IMR-90 (cell line): ENCODE measurements at regions of chr3 and their contacts with region 1.

Region 1: DNA sequence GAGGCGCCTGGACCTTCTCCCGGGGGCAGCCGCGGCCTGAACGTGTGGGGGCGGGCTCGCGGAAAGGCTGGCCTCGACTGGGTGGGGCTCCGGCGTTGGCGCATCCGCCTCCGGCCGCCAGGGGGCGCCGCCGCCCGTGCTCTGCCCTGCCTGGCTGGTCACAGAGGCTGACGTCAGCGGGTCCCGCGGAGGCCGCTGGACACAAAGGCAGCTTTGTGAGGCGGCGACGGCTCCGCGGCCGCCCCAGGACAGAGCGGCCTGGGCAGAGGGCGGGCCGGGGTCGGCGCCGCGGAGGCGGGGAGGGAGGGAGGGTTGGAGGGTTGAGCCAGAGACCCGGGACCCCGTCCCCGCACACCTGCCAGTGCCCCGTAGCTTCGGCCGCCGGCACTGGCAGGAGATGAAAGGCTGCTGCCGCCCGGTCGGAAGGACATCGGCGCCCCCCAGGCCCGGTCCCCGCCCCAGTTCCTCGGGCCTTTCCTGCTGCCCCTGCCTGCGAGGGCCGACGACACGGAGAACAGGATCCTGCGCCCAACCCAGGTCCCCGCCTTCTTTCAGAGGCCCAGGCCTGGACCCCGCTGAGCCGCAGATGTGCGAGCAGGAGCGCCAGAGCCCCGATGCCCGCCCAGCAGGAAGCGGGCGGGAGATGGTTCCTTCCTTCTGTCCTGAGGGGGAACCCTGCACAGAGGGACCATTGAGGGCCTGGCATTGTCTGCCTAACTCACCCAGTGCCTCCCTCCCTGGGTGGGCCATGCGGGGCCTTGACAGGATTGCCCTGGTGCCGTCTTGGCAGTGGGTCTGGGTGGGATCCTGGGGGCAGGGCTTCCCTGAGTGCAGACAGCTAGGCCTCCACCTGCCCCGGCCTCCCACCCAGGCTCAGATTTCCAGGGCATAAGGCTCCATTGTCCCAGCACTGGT is 8.7 kb upstream of the SEMA3B start:
- DNase-seq: peak; percentile 86
- ATAC-seq: peak; percentile 71
- H3K4me3 ChIP-seq: peak overlapping the region; percentile 36
- H3K27ac ChIP-seq: peak overlapping the region; percentile 90
- H3K4me1 ChIP-seq: peaks cover 29% of the 10 kb centered on the region
- H3K27me3 ChIP-seq: no peaks in the 10 kb centered on the region
- CTCF ChIP-seq: peak; percentile 99
- POLR2A ChIP-seq: peak; percentile 77
- RAD21 ChIP-seq: peak; percentile 94

Region 2: DNA sequence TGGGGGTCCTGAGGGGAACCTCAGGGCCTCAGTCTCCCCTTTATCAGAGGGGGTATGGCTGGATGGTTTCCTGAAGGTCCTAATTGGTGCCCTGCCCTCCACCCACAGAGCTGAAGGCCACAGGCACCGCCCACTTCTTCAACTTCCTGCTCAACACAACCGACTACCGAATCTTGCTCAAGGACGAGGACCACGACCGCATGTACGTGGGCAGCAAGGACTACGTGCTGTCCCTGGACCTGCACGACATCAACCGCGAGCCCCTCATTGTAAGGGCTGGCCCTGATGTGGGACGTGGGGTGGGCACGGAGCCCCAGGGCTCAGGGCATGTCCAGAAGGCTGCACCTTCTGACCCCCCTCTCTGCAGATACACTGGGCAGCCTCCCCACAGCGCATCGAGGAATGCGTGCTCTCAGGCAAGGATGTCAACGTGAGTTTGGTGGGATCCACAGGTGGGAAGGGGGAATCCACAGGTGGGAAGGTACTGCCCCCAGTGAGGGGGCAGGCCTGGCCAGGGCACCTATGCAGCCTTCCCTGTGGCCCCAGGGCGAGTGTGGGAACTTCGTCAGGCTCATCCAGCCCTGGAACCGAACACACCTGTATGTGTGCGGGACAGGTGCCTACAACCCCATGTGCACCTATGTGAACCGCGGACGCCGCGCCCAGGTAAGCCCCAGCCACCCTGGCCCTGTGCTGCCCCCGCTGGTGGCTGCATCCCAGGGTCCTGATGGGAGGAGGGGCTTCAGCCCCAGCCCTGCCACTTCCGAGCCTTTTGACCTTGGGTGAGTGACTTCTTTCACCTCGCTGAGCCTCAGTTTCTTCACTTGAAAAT is 86.4 kb before region 1 on chr3:
- CTCF ChIA-PET with region 1: no interaction called
- POLR2A ChIA-PET with region 1: interaction called, 10 read pairs
- dilution Hi-C with region 1: no loop called
- in situ Hi-C with region 1: no loop called
- intact Hi-C with region 1: no loop called
- DNase-seq: no peak
- ATAC-seq: no peak
- H3K4me3 ChIP-seq: no peak overlapping the region
- H3K27ac ChIP-seq: no peak overlapping the region
- H3K4me1 ChIP-seq: peaks cover 13% of the 10 kb centered on the region
- H3K27me3 ChIP-seq: no peaks in the 10 kb centered on the region
- CTCF ChIP-seq: no peak
- POLR2A ChIP-seq: no peak
- RAD21 ChIP-seq: no peak

Region 3: GRCh38 chr3:50272911-50273693 is 12.8 kb after region 1 on chr3:
- CTCF ChIA-PET with region 1: interaction called, 7 read pairs
- POLR2A ChIA-PET with region 1: no interaction called
- dilution Hi-C with region 1: no loop called
- in situ Hi-C with region 1: no loop called
- intact Hi-C with region 1: loop called (anchors 1 kb)
- DNase-seq: peak; percentile 62
- ATAC-seq: peak; percentile 70
- H3K4me3 ChIP-seq: peak overlapping the region; percentile 7; the same call in 1 of the 2 replicates
- H3K27ac ChIP-seq: no peak overlapping the region
- H3K4me1 ChIP-seq: peaks cover 30% of the 10 kb centered on the region
- H3K27me3 ChIP-seq: no peaks in the 10 kb centered on the region
- CTCF ChIP-seq: peak; percentile 98
- POLR2A ChIP-seq: peak; percentile 58; the same call in 1 of the 2 replicates
- RAD21 ChIP-seq: peak; percentile 99

Region 4: GRCh38 chr3:50321336-50322114 is 61.2 kb after region 1 on chr3:
- CTCF ChIA-PET with region 1: no interaction called
- POLR2A ChIA-PET with region 1: no interaction called
- dilution Hi-C with region 1: no loop called
- in situ Hi-C with region 1: no loop called
- intact Hi-C with region 1: loop called (anchors 5 kb)
- DNase-seq: peak; percentile 83
- ATAC-seq: peak; percentile 90
- H3K4me3 ChIP-seq: peak overlapping the region; percentile 58
- H3K27ac ChIP-seq: peak overlapping the region; percentile 98
- H3K4me1 ChIP-seq: peaks cover 25% of the 10 kb centered on the region
- H3K27me3 ChIP-seq: no peaks in the 10 kb centered on the region
- CTCF ChIP-seq: peak; percentile 42
- POLR2A ChIP-seq: peak; percentile 80
- RAD21 ChIP-seq: no peak